ENCODE measurements at regions of chr20 and their contacts with region 1.

Region 1: DNA sequence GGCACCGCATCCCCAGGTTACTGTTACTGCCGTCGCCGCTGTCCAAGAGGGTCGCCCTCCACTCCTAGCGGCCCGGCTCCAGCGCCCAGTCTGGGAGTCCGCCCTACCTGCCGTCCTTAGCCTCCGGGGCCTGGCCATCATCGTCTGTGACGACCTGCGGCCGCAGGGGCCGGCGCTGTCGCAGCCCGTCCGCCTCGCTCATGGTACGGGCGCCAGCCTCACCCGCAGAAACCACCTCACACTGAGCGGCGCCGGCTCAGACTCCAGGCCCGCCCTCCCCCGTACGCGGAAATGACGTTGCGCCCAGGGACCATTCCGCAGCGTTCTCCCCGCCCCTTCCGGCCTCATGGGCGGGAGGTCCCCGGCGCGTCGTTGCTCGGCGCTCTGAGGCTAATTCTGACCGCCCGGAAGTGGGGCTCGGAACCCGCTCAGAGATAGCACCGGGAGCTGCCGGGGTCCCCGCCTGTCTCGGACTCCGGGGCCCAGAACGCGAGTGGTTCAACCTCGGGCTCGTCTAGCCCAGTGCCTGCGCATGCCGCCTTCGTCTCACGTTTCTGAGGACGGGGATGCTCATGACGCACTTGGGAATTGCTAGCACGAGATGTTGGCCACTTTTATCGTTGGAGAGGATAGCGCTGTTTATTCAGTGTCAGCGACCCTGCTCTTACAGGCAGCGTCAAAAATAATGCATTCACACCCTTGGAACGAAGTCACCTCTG is at the start of gene APMAP:
- DNase-seq: peak; percentile 98 to 99
- ATAC-seq: peak; percentile 97
- H3K4me3 ChIP-seq: peak within 1 kb of the TSS; percentile 48 to 78
- H3K27ac ChIP-seq: peak within 1 kb of the TSS; percentile 90 to 97
- H3K4me1 ChIP-seq: no peaks in the 10 kb centered on the region
- H3K27me3 ChIP-seq: no peaks in the 10 kb centered on the region
- total RNA-seq, gene APMAP: 43.8 to 54.1 TPM

Region 2: DNA sequence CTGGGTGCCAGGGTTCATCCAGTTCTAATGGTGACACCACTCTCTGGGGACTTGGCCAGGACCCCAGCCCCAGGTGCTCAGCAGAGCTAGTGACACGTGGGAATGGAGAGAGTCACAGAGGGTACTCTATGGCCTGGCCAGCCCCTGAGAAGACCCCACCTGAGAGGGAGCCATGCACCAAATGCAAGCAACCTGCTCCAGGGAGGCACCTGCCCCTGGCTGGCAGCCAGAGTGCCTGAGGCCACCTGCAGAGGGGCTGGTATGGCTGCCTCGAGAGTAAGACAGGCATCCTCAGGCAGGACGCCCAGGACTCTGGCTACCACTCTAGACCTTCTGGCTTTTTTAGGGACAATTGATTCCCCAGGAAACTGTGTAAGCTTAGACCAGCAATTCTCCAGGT is 82.2 kb before region 1 on chr20:
- intact Hi-C with region 1: no loop called
- DNase-seq: no peak
- ATAC-seq: no peak
- H3K4me3 ChIP-seq: no peak overlapping the region
- H3K27ac ChIP-seq: no peak overlapping the region
- H3K4me1 ChIP-seq: no peaks in the 10 kb centered on the region
- H3K27me3 ChIP-seq: no peaks in the 10 kb centered on the region

Region 3: GRCh38 chr20:25178563-25179438 is 186.2 kb after region 1 on chr20:
- intact Hi-C with region 1: loop called (anchors 1 to 2 kb)
- DNase-seq: peak in 1 of 2 donors; percentile 54
- ATAC-seq: peak; percentile 84
- H3K4me3 ChIP-seq: no peak overlapping the region
- H3K27ac ChIP-seq: peak overlapping the region in 1 of 2 donors; percentile 20
- H3K4me1 ChIP-seq: no peaks in the 10 kb centered on the region
- H3K27me3 ChIP-seq: no peaks in the 10 kb centered on the region

Region 4: GRCh38 chr20:25207146-25207959 is 214.7 kb after region 1 on chr20:
- intact Hi-C with region 1: no loop called
- DNase-seq: peak in 1 of 2 donors; percentile 71
- ATAC-seq: no peak
- H3K4me3 ChIP-seq: no peak overlapping the region
- H3K27ac ChIP-seq: no peak overlapping the region
- H3K4me1 ChIP-seq: no peaks in the 10 kb centered on the region
- H3K27me3 ChIP-seq: no peaks in the 10 kb centered on the region

Region 5: GRCh38 chr20:25247956-25248785 is 255.5 kb after region 1 on chr20 and contains the start of gene PYGB:
- intact Hi-C with region 1: loop called (anchors 2 to 10 kb)
- DNase-seq: peak; percentile 88 to 92
- ATAC-seq: peak; percentile 92
- H3K4me3 ChIP-seq: peak within 1 kb of the TSS; percentile 82 to 90
- H3K27ac ChIP-seq: peak within 1 kb of the TSS; percentile 62 to 83
- H3K4me1 ChIP-seq: no peaks in the 10 kb centered on the region
- H3K27me3 ChIP-seq: no peaks in the 10 kb centered on the region
- total RNA-seq, gene PYGB: 92.8 to 95.2 TPM

Region 6: GRCh38 chr20:25294459-25295385 is 302.1 kb after region 1 on chr20:
- intact Hi-C with region 1: loop called in 1 of 2 experiments (anchors 10 kb)
- DNase-seq: no peak
- ATAC-seq: no peak
- H3K4me3 ChIP-seq: no peak overlapping the region
- H3K27ac ChIP-seq: no peak overlapping the region
- H3K4me1 ChIP-seq: no peaks in the 10 kb centered on the region
- H3K27me3 ChIP-seq: no peaks in the 10 kb centered on the region

Region 7: GRCh38 chr20:25399037-25399430 is 406.4 kb after region 1 on chr20:
- intact Hi-C with region 1: loop called (anchors 2 to 5 kb)
- DNase-seq: no peak
- ATAC-seq: peak; percentile 81
- H3K4me3 ChIP-seq: no peak overlapping the region
- H3K27ac ChIP-seq: no peak overlapping the region
- H3K4me1 ChIP-seq: no peaks in the 10 kb centered on the region
- H3K27me3 ChIP-seq: no peaks in the 10 kb centered on the region

Region 8: GRCh38 chr20:25481235-25481915 is 488.7 kb after region 1 on chr20:
- intact Hi-C with region 1: no loop called
- DNase-seq: peak in 1 of 2 donors; percentile 31
- ATAC-seq: no peak
- H3K4me3 ChIP-seq: no peak overlapping the region
- H3K27ac ChIP-seq: no peak overlapping the region
- H3K4me1 ChIP-seq: no peaks in the 10 kb centered on the region
- H3K27me3 ChIP-seq: no peaks in the 10 kb centered on the region

Measured in aorta (tissue), 5 donors.